ENCODE measurements at regions of chr16 and their contacts with region 1.

Region 1: DNA sequence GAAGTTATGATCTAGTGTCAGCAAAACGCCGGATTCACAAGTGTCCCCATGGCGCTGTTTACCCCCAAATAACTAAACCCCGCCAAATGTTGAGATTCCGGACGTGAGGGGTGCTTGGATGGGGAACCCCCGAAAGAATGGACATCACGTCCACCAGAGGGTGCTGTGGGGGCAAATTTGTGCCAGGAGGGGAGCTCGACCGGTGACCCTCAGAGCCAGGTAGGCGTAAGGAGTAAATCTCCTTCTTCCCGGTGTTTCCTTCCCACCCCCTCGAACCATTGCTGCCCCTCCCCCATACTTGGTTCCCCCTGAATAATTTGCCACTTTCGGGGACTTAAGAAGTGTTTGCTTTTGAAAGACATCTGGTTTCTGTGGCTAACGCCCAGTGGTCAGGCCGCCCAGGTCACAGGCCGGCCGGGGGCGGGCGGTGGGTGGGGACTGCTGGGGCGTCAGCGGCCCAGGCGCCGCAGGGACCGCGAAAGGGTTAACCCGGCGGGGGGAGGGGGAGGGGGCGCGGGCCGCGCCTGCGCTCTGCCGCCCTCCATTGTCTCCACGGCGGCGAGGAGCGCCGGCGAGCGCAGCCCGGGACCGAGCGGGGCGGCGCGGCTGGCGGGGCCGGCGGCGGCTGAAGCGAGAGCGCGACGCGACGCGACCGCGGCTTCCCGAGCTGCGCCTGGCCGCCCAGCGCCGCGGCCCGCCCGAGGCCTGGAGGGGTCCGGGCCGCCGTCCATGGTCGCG is at the start of gene ZNRF1:
- DNase-seq: peak; percentile 90
- total RNA-seq, gene ZNRF1: 31.3 TPM

Region 2: GRCh38 chr16:74896389-74897240 is 102.0 kb before region 1 on chr16:
- intact Hi-C with region 1: loop called (anchors 5 kb)
- DNase-seq: no peak

Region 3: GRCh38 chr16:74954763-74955162 is 43.9 kb before region 1 on chr16:
- intact Hi-C with region 1: no loop called
- DNase-seq: no peak

Region 4: GRCh38 chr16:75044800-75045430 is 46.3 kb after region 1 on chr16:
- intact Hi-C with region 1: loop called (anchors 2 kb)
- DNase-seq: peak; percentile 78

Region 5: GRCh38 chr16:75087375-75087979 is 88.8 kb after region 1 on chr16:
- intact Hi-C with region 1: no loop called
- DNase-seq: no peak

Measured in cardiac septum (tissue), 1 donor.